ENCODE measurements at regions of chr17 and their contacts with region 1.

Region 1: DNA sequence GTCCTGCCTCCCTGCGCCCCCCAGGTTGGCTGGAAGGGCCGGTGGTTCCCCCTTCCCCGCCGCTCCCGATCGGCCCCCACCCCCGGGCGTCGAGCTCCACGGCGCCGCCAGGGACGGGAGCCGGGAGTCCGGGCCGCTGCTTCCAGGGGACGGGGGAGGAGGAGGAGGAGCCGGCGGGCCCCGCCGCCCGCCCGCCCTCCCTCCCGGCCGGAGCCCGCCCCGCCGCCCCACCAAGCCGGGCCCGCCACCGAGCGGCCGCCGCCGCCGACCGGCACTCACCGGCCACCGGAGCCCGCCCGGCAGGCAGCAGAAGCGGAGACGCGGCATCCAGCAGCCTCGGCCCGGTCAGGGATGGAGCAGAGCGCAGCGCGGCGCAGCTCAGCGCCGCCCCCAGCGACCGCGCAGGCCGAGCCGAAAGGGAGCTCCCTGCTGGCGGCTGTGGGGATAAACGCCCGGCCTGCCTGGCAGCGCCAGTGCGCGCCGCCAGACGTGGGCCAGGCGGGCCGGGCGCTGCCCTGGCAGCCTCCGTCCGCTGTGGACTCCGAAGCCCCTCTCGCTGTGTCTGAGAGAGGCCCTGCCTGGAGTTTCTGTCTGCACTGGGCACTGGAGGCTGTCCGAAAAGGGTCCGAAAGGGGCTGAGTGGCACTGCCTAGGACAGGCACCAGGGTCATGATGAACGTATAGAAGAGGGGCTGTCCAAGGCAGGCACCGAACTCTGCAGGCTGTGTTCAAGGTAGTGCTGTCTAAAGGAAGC is at the start of gene MYO18A:
- DNase-seq: peak; percentile 78
- H3K4me3 Mint-ChIP-seq: peak within 1 kb of the TSS; percentile 58
- H3K27ac Mint-ChIP-seq: peak within 1 kb of the TSS; percentile 27
- H3K4me1 Mint-ChIP-seq: peaks cover 36% of the 10 kb centered on the region
- H3K27me3 Mint-ChIP-seq: peaks cover 15% of the 10 kb centered on the region
- total RNA-seq, gene MYO18A: 82.2 to 101 TPM

Region 2: GRCh38 chr17:29168079-29168758 is 12.0 kb before region 1 on chr17:
- CTCF ChIA-PET with region 1: interaction called, 27 read pairs
- POLR2A ChIA-PET with region 1: no interaction called
- DNase-seq: no peak
- H3K4me3 Mint-ChIP-seq: no peak overlapping the region
- H3K27ac Mint-ChIP-seq: no peak overlapping the region
- H3K4me1 Mint-ChIP-seq: no peaks in the 10 kb centered on the region
- H3K27me3 Mint-ChIP-seq: no peaks in the 10 kb centered on the region

Region 3: DNA sequence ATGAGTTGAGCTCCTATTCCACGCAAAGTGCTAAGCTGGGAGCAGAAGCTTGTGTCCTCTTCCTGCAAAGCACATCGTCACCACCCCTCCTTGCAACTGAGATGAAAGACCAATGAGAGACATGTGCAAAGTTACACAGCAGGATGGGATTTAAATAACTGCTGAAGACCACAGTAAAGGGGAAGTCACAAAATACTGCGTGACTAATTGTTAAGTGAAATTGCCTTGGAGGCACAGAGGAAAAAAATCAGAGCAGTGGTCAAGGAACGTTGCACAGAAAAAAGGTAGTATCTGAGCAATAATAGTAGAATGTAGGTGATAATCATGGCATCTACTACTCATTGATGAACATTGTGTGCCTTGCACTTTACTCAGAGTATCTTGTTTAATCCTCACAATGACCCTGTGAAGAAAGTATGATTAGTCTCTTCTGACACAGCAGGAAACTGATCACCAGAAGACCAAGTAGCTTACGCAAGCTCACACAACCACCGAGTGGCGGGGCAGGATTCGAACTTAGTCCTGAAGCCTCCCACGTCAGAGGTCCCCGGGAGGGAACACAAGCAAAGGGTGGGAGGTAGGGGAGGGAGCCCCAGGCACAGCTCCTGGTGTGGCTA is 15.4 kb after region 1 on chr17:
- CTCF ChIA-PET with region 1: interaction called, 37 read pairs
- POLR2A ChIA-PET with region 1: no interaction called
- DNase-seq: no peak
- H3K4me3 Mint-ChIP-seq: no peak overlapping the region
- H3K27ac Mint-ChIP-seq: no peak overlapping the region
- H3K4me1 Mint-ChIP-seq: no peaks in the 10 kb centered on the region
- H3K27me3 Mint-ChIP-seq: peaks cover 27% of the 10 kb centered on the region

Region 4: GRCh38 chr17:29283271-29283895 is 103.2 kb after region 1 on chr17:
- CTCF ChIA-PET with region 1: no interaction called
- POLR2A ChIA-PET with region 1: no interaction called
- DNase-seq: no peak
- H3K4me3 Mint-ChIP-seq: no peak overlapping the region
- H3K27ac Mint-ChIP-seq: no peak overlapping the region
- H3K4me1 Mint-ChIP-seq: peaks cover 47% of the 10 kb centered on the region
- H3K27me3 Mint-ChIP-seq: no peaks in the 10 kb centered on the region